ENCODE measurements at regions of chr11 and their contacts with region 1.

Region 1: DNA sequence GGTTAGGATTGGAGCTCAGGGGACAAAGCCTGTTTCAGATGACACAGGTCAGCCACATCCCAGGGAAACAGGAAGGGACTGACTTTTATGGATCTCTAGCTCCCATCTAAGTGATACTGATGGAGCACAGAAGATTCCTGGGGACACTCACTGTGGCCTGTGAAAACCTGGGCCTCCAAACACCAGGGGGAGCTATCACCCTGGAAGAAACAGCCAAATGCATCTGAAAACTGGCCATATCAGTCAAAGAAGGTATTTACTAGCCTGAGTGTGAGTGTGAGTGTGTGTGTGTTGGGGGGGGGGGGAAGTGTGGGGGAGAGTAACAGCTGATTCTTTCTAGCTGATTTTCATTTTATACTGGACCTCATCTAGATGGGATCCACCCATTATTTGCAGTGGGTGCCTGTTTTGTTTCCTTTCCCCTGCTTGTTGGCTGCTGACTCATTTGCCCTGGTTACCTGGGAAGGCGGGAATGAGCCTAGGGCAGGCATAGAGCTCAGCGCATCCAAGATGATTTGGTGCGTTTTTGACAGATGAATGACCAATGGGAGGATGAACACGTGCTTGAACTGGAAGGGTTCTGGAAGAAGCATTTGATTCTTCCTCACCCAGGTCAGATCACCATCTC is 284.0 kb downstream of the KIRREL3 start:
- DNase-seq: peak in 1 of 2 experiments; percentile 30
- H3K4me3 ChIP-seq: no peak overlapping the region
- H3K27ac ChIP-seq: no peak overlapping the region
- H3K4me1 ChIP-seq: no peaks in the 10 kb centered on the region
- H3K27me3 ChIP-seq: peaks cover 82% of the 10 kb centered on the region
- CTCF ChIP-seq: peak; percentile 63

Region 2: GRCh38 chr11:126969865-126970479 is 253.4 kb after region 1 on chr11:
- CTCF ChIA-PET with region 1: no interaction called
- POLR2A ChIA-PET with region 1: no interaction called
- intact Hi-C with region 1: loop called (anchors 1 kb)
- DNase-seq: no peak
- H3K4me3 ChIP-seq: no peak overlapping the region
- H3K27ac ChIP-seq: no peak overlapping the region
- H3K4me1 ChIP-seq: no peaks in the 10 kb centered on the region
- H3K27me3 ChIP-seq: peaks cover 38% of the 10 kb centered on the region
- CTCF ChIP-seq: peak; percentile 46; the same call in 1 of the 2 replicates